B cell (primary cell): ENCODE measurements at regions of chr22 and their contacts with region 1.

Region 1: GRCh38 chr22:17258015-17258787 is 39.0 kb upstream of the ADA2 start:
- DNase-seq: peak; percentile 75
- ATAC-seq: peak; percentile 92
- H3K4me3 ChIP-seq: peak overlapping the region in 3 of 5 experiments; percentile 23 to 28 (median 27)
- H3K4me3 Mint-ChIP-seq: peak overlapping the region; percentile 72
- H3K27ac ChIP-seq: peak overlapping the region; percentile 34 to 65
- H3K27ac Mint-ChIP-seq: peak overlapping the region; percentile 95
- H3K4me1 ChIP-seq: peaks cover 17 to 26% of the 10 kb centered on the region in 2 donors
- H3K4me1 Mint-ChIP-seq: peaks cover 29% of the 10 kb centered on the region
- H3K27me3 ChIP-seq: no peaks in the 10 kb centered on the region
- H3K27me3 Mint-ChIP-seq: no peaks in the 10 kb centered on the region
- CTCF ChIP-seq: no peak

Region 2: DNA sequence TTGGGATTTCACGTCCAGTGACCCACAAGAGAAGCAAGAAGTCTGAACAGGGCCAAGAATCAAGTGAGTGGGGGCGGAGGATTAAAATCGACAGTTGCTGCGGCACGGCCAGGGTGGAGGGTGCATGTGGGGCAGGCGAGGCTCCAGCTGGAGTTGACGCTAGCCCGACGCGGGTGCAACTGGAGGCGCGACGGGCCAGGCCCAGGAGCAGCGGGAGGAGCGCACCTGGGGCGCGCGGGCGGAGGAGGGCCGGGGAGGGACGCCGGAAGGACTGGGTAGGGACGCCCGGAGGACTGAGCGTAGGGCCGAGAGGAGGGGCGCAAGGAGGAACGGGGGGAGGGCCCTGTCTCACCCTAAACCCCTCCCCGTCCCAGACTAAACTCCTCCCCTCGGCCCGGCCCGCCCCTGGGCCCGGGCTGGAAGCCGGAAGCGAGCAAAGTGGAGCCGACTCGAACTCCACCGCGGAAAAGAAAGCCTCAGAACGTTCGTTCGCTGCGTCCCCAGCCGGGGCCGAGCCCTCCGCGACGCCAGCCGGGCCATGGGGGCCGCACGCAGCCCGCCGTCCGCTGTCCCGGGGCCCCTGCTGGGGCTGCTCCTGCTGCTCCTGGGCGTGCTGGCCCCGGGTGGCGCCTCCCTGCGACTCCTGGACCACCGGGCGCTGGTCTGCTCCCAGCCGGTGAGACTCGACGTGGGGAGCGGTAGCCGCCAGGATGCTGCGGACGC is 173.5 kb before region 1 on chr22 and contains the start of gene IL17RA:
- CTCF ChIA-PET with region 1: no interaction called
- POLR2A ChIA-PET with region 1: no interaction called
- intact Hi-C with region 1: loop called (anchors 2 kb)
- DNase-seq: peak; percentile 93
- ATAC-seq: peak; percentile 99
- H3K4me3 ChIP-seq: peak within 1 kb of the TSS; percentile 65 to 97 (median 81)
- H3K4me3 Mint-ChIP-seq: peak within 1 kb of the TSS; percentile 95
- H3K27ac ChIP-seq: peak within 1 kb of the TSS; percentile 26 to 80
- H3K27ac Mint-ChIP-seq: peak within 1 kb of the TSS; percentile 95
- H3K4me1 ChIP-seq: peaks cover 25 to 36% of the 10 kb centered on the region in 2 donors
- H3K4me1 Mint-ChIP-seq: peaks cover 36% of the 10 kb centered on the region
- H3K27me3 ChIP-seq: no peaks in the 10 kb centered on the region
- H3K27me3 Mint-ChIP-seq: no peaks in the 10 kb centered on the region
- CTCF ChIP-seq: no peak
- total RNA-seq, gene IL17RA: 22.4 and 24.6 TPM in 2 replicates

Region 3: GRCh38 chr22:17158568-17159503 is 99.4 kb before region 1 on chr22 and contains the start of gene HDHD5:
- CTCF ChIA-PET with region 1: no interaction called
- POLR2A ChIA-PET with region 1: no interaction called
- intact Hi-C with region 1: loop called (anchors 5 kb)
- DNase-seq: peak; percentile 93
- ATAC-seq: peak; percentile 92
- H3K4me3 ChIP-seq: peak within 1 kb of the TSS; percentile 30 to 92 (median 84)
- H3K4me3 Mint-ChIP-seq: peak within 1 kb of the TSS; percentile 88
- H3K27ac ChIP-seq: peak within 1 kb of the TSS; percentile 38 to 75
- H3K27ac Mint-ChIP-seq: peak within 1 kb of the TSS; percentile 75
- H3K4me1 ChIP-seq: peaks cover 12 to 21% of the 10 kb centered on the region in 2 donors
- H3K4me1 Mint-ChIP-seq: peaks cover 21% of the 10 kb centered on the region
- H3K27me3 ChIP-seq: no peaks in the 10 kb centered on the region
- H3K27me3 Mint-ChIP-seq: no peaks in the 10 kb centered on the region
- CTCF ChIP-seq: no peak
- total RNA-seq, gene HDHD5: 17.7 and 23.3 TPM in 2 replicates

Region 4: DNA sequence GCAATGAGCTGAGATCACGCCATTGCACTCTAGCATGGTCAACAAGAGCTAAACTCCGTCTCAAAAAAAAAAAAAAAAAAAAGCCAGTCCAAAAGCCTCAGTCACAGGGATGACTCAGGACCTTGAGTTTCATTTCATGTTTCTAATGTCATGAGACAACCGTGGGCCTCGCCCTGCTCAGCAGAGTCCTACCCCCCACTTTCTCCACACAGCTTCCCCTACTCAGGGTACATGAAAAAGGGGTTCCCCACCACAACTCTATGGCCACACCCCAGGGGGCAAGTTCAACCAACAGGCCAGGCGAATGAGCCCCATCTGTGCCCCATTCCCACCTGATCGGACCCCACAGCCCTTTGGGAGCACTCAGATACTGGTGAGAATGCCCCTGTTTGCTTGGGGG is 14.7 kb before region 1 on chr22:
- CTCF ChIA-PET with region 1: no interaction called
- POLR2A ChIA-PET with region 1: interaction called, 8 read pairs
- intact Hi-C with region 1: loop called (anchors 1 kb)
- DNase-seq: peak; percentile 82
- ATAC-seq: peak; percentile 97
- H3K4me3 ChIP-seq: no peak overlapping the region
- H3K4me3 Mint-ChIP-seq: peak overlapping the region; percentile 61
- H3K27ac ChIP-seq: peak overlapping the region; percentile 2 to 48
- H3K27ac Mint-ChIP-seq: peak overlapping the region; percentile 89
- H3K4me1 ChIP-seq: peaks cover 14 to 23% of the 10 kb centered on the region in 2 donors
- H3K4me1 Mint-ChIP-seq: peaks cover 24% of the 10 kb centered on the region
- H3K27me3 ChIP-seq: no peaks in the 10 kb centered on the region
- H3K27me3 Mint-ChIP-seq: no peaks in the 10 kb centered on the region
- CTCF ChIP-seq: no peak

Region 5: GRCh38 chr22:17303840-17304779 is 45.9 kb after region 1 on chr22:
- CTCF ChIA-PET with region 1: interaction called, 3 read pairs
- POLR2A ChIA-PET with region 1: no interaction called
- intact Hi-C with region 1: loop called (anchors 1 kb)
- DNase-seq: peak; percentile 87
- ATAC-seq: peak; percentile 94
- H3K4me3 ChIP-seq: peak overlapping the region in 1 of 5 experiments; percentile 31
- H3K4me3 Mint-ChIP-seq: peak overlapping the region; percentile 82
- H3K27ac ChIP-seq: peak overlapping the region; percentile 67 to 77
- H3K27ac Mint-ChIP-seq: peak overlapping the region; percentile 89
- H3K4me1 ChIP-seq: peaks cover 25 to 33% of the 10 kb centered on the region in 2 donors
- H3K4me1 Mint-ChIP-seq: peaks cover 27% of the 10 kb centered on the region
- H3K27me3 ChIP-seq: no peaks in the 10 kb centered on the region
- H3K27me3 Mint-ChIP-seq: no peaks in the 10 kb centered on the region
- CTCF ChIP-seq: no peak

Region 6: GRCh38 chr22:17319546-17319945 is 61.3 kb after region 1 on chr22:
- CTCF ChIA-PET with region 1: no interaction called
- POLR2A ChIA-PET with region 1: no interaction called
- intact Hi-C with region 1: no loop called
- DNase-seq: no peak
- ATAC-seq: no peak
- H3K4me3 ChIP-seq: no peak overlapping the region
- H3K4me3 Mint-ChIP-seq: no peak overlapping the region
- H3K27ac ChIP-seq: no peak overlapping the region
- H3K27ac Mint-ChIP-seq: no peak overlapping the region
- H3K4me1 ChIP-seq: peaks cover 5 to 7% of the 10 kb centered on the region in 2 donors
- H3K4me1 Mint-ChIP-seq: peaks cover 10% of the 10 kb centered on the region
- H3K27me3 ChIP-seq: no peaks in the 10 kb centered on the region
- H3K27me3 Mint-ChIP-seq: peaks cover 4% of the 10 kb centered on the region
- CTCF ChIP-seq: no peak

Region 7: GRCh38 chr22:17396549-17396948 is 138.3 kb after region 1 on chr22:
- CTCF ChIA-PET with region 1: no interaction called
- POLR2A ChIA-PET with region 1: no interaction called
- intact Hi-C with region 1: no loop called
- DNase-seq: no peak
- ATAC-seq: no peak
- H3K4me3 ChIP-seq: no peak overlapping the region
- H3K4me3 Mint-ChIP-seq: no peak overlapping the region
- H3K27ac ChIP-seq: no peak overlapping the region
- H3K27ac Mint-ChIP-seq: no peak overlapping the region
- H3K4me1 ChIP-seq: no peaks in the 10 kb centered on the region
- H3K4me1 Mint-ChIP-seq: no peaks in the 10 kb centered on the region
- H3K27me3 ChIP-seq: no peaks in the 10 kb centered on the region
- H3K27me3 Mint-ChIP-seq: peaks cover 4% of the 10 kb centered on the region
- CTCF ChIP-seq: no peak